ENCODE measurements at regions of chr5 and their contacts with region 1.

Region 1: GRCh38 chr5:132495667-132496190 is 5.2 kb upstream of the IRF1 start:
- DNase-seq: peak; percentile 92
- H3K4me3 Mint-ChIP-seq: peak overlapping the region; percentile 80
- H3K27ac Mint-ChIP-seq: peak overlapping the region; percentile 34
- H3K4me1 Mint-ChIP-seq: peaks cover 47% of the 10 kb centered on the region
- H3K27me3 Mint-ChIP-seq: no peaks in the 10 kb centered on the region
- CTCF ChIP-seq: no peak

Region 2: DNA sequence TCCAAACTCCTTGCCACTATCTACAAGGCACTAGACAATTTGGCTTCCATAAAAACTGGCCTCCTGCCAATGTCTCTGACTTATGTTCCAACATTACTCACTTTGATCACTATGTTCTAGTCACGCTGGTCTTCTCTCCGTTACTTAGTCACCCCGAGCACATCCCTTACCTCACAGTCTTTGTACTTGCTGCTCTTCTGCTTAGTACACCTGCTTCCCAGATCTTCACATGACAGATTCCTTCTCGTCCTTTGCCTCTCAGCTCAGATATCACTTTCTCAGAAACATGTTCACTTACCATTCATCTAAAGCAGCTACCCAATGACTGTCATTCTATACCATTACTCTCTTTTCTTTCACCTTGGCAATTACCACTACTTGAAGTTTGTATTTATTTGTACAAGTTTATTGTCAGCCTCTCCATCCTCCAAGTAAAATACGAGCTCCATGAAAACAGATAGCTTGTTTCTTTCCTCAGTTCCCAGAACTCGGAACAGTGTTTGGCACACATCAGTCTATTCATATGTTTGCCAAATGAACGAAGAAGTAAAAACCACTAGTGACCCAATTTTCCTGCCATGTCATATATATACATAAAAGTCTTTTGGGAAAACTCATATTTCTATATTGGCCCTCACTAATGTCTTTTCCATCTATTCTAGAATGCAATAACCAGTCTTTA is 132.2 kb before region 1 on chr5:
- CTCF ChIA-PET with region 1: interaction called, 33 read pairs
- POLR2A ChIA-PET with region 1: interaction called, 72 read pairs
- intact Hi-C with region 1: no loop called
- DNase-seq: peak; percentile 99
- H3K4me3 Mint-ChIP-seq: peak overlapping the region; percentile 45
- H3K27ac Mint-ChIP-seq: peak overlapping the region; percentile 99
- H3K4me1 Mint-ChIP-seq: peaks cover 52% of the 10 kb centered on the region
- H3K27me3 Mint-ChIP-seq: no peaks in the 10 kb centered on the region
- CTCF ChIP-seq: no peak

Region 3: DNA sequence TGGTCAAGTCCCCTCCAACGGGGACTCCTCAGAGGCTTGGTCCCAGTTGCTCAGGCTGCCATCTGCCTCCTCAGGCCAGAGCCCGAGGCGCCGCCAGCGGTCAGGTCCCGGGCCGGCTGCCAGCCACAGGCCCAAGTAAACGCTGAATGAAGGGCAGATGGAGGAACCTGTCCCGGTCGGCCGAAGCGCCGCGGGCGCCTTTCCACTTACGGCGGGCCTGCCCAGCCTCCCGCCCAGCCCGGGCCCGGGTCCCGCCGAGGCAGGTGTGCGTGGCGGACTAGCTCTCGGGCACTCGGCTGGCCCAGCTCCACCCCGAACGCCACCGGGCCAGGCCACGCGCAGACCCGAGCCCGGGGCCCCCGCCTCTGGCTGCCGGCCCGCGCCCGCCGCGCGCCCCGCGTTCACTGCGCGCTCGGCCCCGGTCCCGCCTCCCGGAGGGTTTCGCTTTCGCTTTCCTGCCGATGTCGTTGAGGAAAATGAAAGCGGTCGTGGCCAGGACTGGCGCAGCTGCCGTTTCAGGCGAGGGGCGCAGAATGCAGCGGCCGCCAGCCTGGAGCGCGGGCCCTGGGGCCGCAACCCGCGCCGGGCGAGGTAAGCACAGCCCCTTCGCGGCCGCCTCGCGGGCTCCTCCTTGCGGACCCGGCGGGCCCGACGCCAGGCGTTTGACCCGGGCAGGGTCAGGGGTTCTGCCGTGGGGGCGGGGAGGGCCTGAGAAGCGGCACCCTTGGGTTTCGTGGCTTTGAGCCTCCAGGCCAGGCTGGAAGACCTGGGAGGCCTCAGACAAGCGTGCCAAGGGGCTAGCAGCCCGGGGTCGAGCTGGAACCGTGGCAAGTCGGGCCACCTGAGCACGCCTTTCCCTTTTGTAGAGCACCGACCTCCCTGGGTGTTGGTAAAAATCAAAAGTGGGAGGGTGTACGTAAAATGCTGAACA is 85.0 kb before region 1 on chr5:
- CTCF ChIA-PET with region 1: interaction called, 89 read pairs
- POLR2A ChIA-PET with region 1: interaction called, 78 read pairs
- intact Hi-C with region 1: no loop called
- DNase-seq: peak; percentile 78
- H3K4me3 Mint-ChIP-seq: peak overlapping the region; percentile 80
- H3K27ac Mint-ChIP-seq: peak overlapping the region; percentile 93
- H3K4me1 Mint-ChIP-seq: peaks cover 27% of the 10 kb centered on the region
- H3K27me3 Mint-ChIP-seq: no peaks in the 10 kb centered on the region
- CTCF ChIP-seq: peak; percentile 95

Region 4: GRCh38 chr5:132426525-132427138 is 69.1 kb before region 1 on chr5:
- CTCF ChIA-PET with region 1: interaction called, 19 read pairs
- POLR2A ChIA-PET with region 1: interaction called, 67 read pairs
- intact Hi-C with region 1: no loop called
- DNase-seq: peak; percentile 96
- H3K4me3 Mint-ChIP-seq: no peak overlapping the region
- H3K27ac Mint-ChIP-seq: peak overlapping the region; percentile 68
- H3K4me1 Mint-ChIP-seq: peaks cover 47% of the 10 kb centered on the region
- H3K27me3 Mint-ChIP-seq: no peaks in the 10 kb centered on the region
- CTCF ChIP-seq: peak; percentile 22

Region 5: GRCh38 chr5:132456296-132457001 is 39.3 kb before region 1 on chr5:
- CTCF ChIA-PET with region 1: interaction called, 10 read pairs
- POLR2A ChIA-PET with region 1: interaction called, 26 read pairs
- intact Hi-C with region 1: loop called (anchors 2 kb)
- DNase-seq: no peak
- H3K4me3 Mint-ChIP-seq: no peak overlapping the region
- H3K27ac Mint-ChIP-seq: peak overlapping the region; percentile 60
- H3K4me1 Mint-ChIP-seq: peaks cover 47% of the 10 kb centered on the region
- H3K27me3 Mint-ChIP-seq: no peaks in the 10 kb centered on the region
- CTCF ChIP-seq: no peak

Region 6: GRCh38 chr5:132506094-132506692 is 10.5 kb after region 1 on chr5:
- CTCF ChIA-PET with region 1: interaction called, 58 read pairs
- POLR2A ChIA-PET with region 1: interaction called, 15 read pairs
- intact Hi-C with region 1: no loop called
- DNase-seq: peak; percentile 78
- H3K4me3 Mint-ChIP-seq: no peak overlapping the region
- H3K27ac Mint-ChIP-seq: no peak overlapping the region
- H3K4me1 Mint-ChIP-seq: peaks cover 23% of the 10 kb centered on the region
- H3K27me3 Mint-ChIP-seq: no peaks in the 10 kb centered on the region
- CTCF ChIP-seq: peak; percentile 47